CD4-positive, alpha-beta T cell (primary cell): ENCODE measurements at regions of chr3 and their contacts with region 1.

Region 1: DNA sequence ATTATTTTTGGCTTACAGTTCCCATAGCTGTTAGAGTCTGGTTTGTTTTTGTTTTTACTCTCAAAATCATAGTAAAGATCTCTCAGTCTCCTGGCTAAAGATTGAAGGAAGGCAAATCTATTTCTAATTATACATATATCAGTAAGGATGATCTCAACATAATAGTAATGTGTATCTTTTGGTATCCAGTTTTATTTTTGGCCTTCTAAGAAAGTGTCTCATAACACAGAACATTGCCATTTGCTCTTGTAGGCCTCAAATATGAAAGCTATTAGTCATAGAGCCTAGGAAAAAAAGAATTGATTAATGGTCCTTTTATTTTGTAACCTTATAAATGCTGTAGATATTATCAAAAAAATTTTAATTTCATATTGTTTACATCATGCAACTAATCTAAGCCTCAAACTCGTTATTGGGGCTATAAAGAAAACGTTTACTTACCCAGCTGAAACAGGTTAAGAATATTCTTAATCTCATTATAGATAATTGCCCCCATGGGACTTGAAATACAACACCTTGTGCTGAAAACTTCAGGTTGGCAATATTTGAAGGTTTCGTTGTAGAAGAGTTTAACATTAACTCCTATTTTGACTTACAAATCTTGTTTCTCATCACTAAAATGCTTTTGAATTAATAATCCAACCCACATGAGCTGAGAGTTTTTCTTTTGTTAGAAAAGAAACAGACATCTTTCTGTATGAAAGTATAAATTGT is 16.7 kb downstream of the FBXO45 start:
- DNase-seq: no peak
- ATAC-seq: no peak
- H3K4me3 ChIP-seq: no peak overlapping the region
- H3K4me3 Mint-ChIP-seq: no peak overlapping the region
- H3K27ac ChIP-seq: no peak overlapping the region
- H3K27ac Mint-ChIP-seq: no peak overlapping the region
- H3K4me1 ChIP-seq: no peaks in the 10 kb centered on the region
- H3K4me1 Mint-ChIP-seq: no peaks in the 10 kb centered on the region
- H3K27me3 ChIP-seq: no peaks in the 10 kb centered on the region
- H3K27me3 Mint-ChIP-seq: no peaks in the 10 kb centered on the region
- CTCF ChIP-seq: no peak

Region 2: GRCh38 chr3:196440041-196440537 is 145.1 kb before region 1 on chr3:
- CTCF ChIA-PET with region 1: no interaction called
- POLR2A ChIA-PET with region 1: no interaction called
- intact Hi-C with region 1: no loop called
- DNase-seq: no peak
- ATAC-seq: no peak
- H3K4me3 ChIP-seq: no peak overlapping the region
- H3K4me3 Mint-ChIP-seq: no peak overlapping the region
- H3K27ac ChIP-seq: no peak overlapping the region
- H3K27ac Mint-ChIP-seq: no peak overlapping the region
- H3K4me1 ChIP-seq: no peaks in the 10 kb centered on the region
- H3K4me1 Mint-ChIP-seq: no peaks in the 10 kb centered on the region
- H3K27me3 ChIP-seq: no peaks in the 10 kb centered on the region
- H3K27me3 Mint-ChIP-seq: no peaks in the 10 kb centered on the region
- CTCF ChIP-seq: no peak

Region 3: GRCh38 chr3:196537319-196537984 is 47.7 kb before region 1 on chr3:
- CTCF ChIA-PET with region 1: no interaction called
- POLR2A ChIA-PET with region 1: no interaction called
- intact Hi-C with region 1: loop called in 1 of 2 experiments (anchors 5 kb)
- DNase-seq: peak; percentile 43 to 83 (median 63)
- ATAC-seq: no peak
- H3K4me3 ChIP-seq: no peak overlapping the region
- H3K4me3 Mint-ChIP-seq: no peak overlapping the region
- H3K27ac ChIP-seq: no peak overlapping the region
- H3K27ac Mint-ChIP-seq: no peak overlapping the region
- H3K4me1 ChIP-seq: peaks cover 3% of the 10 kb centered on the region
- H3K4me1 Mint-ChIP-seq: no peaks in the 10 kb centered on the region
- H3K27me3 ChIP-seq: no peaks in the 10 kb centered on the region
- H3K27me3 Mint-ChIP-seq: no peaks in the 10 kb centered on the region
- CTCF ChIP-seq: peak; percentile 91